PC-3 (cell line): ENCODE measurements at regions of chr14 and their contacts with region 1.

Region 1: GRCh38 chr14:32382704-32383103 is 53.6 kb downstream of the AKAP6 start:
- DNase-seq: peak; percentile 59
- ATAC-seq: peak; percentile 97
- H3K4me3 ChIP-seq: no peak overlapping the region
- H3K27ac ChIP-seq: no peak overlapping the region
- H3K4me1 ChIP-seq: peaks cover 28% of the 10 kb centered on the region
- H3K27me3 ChIP-seq: no peaks in the 10 kb centered on the region
- CTCF ChIP-seq: peak; percentile 88

Region 2: GRCh38 chr14:31510222-31510621 is 872.5 kb before region 1 on chr14:
- CTCF ChIA-PET with region 1: no interaction called
- POLR2A ChIA-PET with region 1: no interaction called
- intact Hi-C with region 1: loop called (anchors 10 kb)
- DNase-seq: peak; percentile 58
- ATAC-seq: peak; percentile 38
- H3K4me3 ChIP-seq: no peak overlapping the region
- H3K27ac ChIP-seq: no peak overlapping the region
- H3K4me1 ChIP-seq: no peaks in the 10 kb centered on the region
- H3K27me3 ChIP-seq: no peaks in the 10 kb centered on the region
- CTCF ChIP-seq: peak; percentile 87

Region 3: DNA sequence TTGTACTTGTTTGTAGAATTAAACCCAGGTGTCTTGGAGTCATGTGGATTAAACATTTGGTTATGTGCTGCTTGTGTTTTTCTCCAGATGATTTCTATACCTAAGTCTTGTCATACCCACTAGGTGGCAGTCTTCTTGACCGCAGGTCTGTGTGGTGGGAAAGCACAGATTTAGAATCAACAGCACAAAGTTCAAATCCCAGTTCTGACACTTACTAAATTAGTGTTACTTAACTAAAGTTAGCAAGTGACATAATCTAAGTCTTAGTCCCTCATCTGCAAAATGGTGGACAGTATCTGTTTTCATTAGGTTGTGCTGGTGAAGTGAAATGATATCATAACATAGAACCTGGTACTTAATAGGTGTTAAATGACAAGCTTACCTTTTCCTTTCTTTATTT is 456.6 kb before region 1 on chr14:
- CTCF ChIA-PET with region 1: no interaction called
- POLR2A ChIA-PET with region 1: no interaction called
- intact Hi-C with region 1: loop called (anchors 5 kb)
- DNase-seq: peak; percentile 64
- ATAC-seq: no peak
- H3K4me3 ChIP-seq: no peak overlapping the region
- H3K27ac ChIP-seq: no peak overlapping the region
- H3K4me1 ChIP-seq: peaks cover 20% of the 10 kb centered on the region; the same call in 1 of the 2 replicates
- H3K27me3 ChIP-seq: no peaks in the 10 kb centered on the region
- CTCF ChIP-seq: peak; percentile 89

Region 4: DNA sequence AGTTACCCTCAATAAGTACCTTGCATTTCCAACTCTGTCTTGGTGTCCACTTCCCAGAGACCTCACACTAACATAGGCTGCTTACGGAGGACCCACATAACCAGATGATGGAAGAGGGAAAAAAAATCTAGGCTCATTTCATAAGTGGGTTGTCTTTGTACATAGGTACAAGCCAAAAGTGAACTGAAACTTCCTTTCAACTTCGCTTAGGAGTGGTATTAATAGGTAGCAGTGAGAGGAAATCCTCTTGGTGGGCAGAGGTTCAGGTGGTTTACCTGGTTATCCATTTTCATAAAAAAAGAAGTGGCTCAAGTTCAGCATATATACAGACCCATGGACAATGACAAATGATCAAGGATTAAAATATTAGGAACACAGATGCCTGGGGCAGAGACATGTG is 216.7 kb before region 1 on chr14:
- CTCF ChIA-PET with region 1: no interaction called
- POLR2A ChIA-PET with region 1: no interaction called
- intact Hi-C with region 1: no loop called
- DNase-seq: no peak
- ATAC-seq: no peak
- H3K4me3 ChIP-seq: no peak overlapping the region
- H3K27ac ChIP-seq: no peak overlapping the region
- H3K4me1 ChIP-seq: no peaks in the 10 kb centered on the region
- H3K27me3 ChIP-seq: no peaks in the 10 kb centered on the region
- CTCF ChIP-seq: no peak

Region 5: GRCh38 chr14:32202998-32203882 is 179.5 kb before region 1 on chr14 and contains the start of gene RNU6-8:
- CTCF ChIA-PET with region 1: no interaction called
- POLR2A ChIA-PET with region 1: no interaction called
- intact Hi-C with region 1: loop called (anchors 1 kb)
- DNase-seq: peak; percentile 92
- ATAC-seq: peak; percentile 68
- H3K4me3 ChIP-seq: peak within 1 kb of the TSS; percentile 87
- H3K27ac ChIP-seq: peak within 1 kb of the TSS; percentile 65
- H3K4me1 ChIP-seq: peaks cover 21% of the 10 kb centered on the region; the same call in 1 of the 2 replicates
- H3K27me3 ChIP-seq: no peaks in the 10 kb centered on the region
- CTCF ChIP-seq: no peak
- total RNA-seq, gene RNU6-8: not detected in 2 replicates

Region 6: DNA sequence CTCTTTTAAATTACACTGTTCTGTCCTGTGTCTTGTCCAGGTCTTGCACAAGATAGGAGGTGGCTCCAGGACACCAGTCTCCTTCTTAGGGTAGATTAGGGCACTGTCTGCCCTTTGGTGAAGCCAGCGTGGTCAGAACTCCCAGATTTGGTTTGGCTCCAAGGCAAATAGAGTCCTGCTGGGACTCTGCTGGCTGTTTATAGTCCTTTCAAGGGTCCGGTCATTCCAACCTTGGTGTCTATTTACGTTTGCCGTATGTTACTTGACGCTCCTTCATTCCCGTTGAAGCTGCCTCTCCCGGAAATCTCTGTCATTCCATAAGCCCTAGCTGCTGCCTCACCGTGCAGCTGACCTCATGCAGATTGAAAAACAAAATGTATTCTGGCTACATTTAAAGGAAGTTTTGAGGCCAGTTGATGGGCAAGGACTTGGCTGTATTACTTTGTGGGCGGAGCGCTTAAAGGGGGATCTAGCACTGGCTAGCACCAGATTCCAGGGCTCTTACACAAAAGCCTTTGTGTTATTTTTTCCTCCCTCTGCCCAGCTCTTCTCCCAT is 127.0 kb after region 1 on chr14:
- CTCF ChIA-PET with region 1: interaction called, 23 read pairs
- POLR2A ChIA-PET with region 1: no interaction called
- intact Hi-C with region 1: loop called (anchors 1 kb)
- DNase-seq: peak; percentile 80
- ATAC-seq: peak; percentile 69
- H3K4me3 ChIP-seq: peak overlapping the region; percentile 43
- H3K27ac ChIP-seq: peak overlapping the region; percentile 40
- H3K4me1 ChIP-seq: peaks cover 52% of the 10 kb centered on the region
- H3K27me3 ChIP-seq: no peaks in the 10 kb centered on the region
- CTCF ChIP-seq: no peak

Region 7: GRCh38 chr14:32560209-32560857 is 177.6 kb after region 1 on chr14:
- CTCF ChIA-PET with region 1: interaction called, 5 read pairs
- POLR2A ChIA-PET with region 1: no interaction called
- intact Hi-C with region 1: loop called (anchors 1 kb)
- DNase-seq: peak; percentile 84
- ATAC-seq: peak; percentile 61
- H3K4me3 ChIP-seq: no peak overlapping the region
- H3K27ac ChIP-seq: no peak overlapping the region
- H3K4me1 ChIP-seq: peaks cover 30% of the 10 kb centered on the region
- H3K27me3 ChIP-seq: no peaks in the 10 kb centered on the region
- CTCF ChIP-seq: peak; percentile 97